ENCODE measurements at regions of chr17 and their contacts with region 1.

Region 1: DNA sequence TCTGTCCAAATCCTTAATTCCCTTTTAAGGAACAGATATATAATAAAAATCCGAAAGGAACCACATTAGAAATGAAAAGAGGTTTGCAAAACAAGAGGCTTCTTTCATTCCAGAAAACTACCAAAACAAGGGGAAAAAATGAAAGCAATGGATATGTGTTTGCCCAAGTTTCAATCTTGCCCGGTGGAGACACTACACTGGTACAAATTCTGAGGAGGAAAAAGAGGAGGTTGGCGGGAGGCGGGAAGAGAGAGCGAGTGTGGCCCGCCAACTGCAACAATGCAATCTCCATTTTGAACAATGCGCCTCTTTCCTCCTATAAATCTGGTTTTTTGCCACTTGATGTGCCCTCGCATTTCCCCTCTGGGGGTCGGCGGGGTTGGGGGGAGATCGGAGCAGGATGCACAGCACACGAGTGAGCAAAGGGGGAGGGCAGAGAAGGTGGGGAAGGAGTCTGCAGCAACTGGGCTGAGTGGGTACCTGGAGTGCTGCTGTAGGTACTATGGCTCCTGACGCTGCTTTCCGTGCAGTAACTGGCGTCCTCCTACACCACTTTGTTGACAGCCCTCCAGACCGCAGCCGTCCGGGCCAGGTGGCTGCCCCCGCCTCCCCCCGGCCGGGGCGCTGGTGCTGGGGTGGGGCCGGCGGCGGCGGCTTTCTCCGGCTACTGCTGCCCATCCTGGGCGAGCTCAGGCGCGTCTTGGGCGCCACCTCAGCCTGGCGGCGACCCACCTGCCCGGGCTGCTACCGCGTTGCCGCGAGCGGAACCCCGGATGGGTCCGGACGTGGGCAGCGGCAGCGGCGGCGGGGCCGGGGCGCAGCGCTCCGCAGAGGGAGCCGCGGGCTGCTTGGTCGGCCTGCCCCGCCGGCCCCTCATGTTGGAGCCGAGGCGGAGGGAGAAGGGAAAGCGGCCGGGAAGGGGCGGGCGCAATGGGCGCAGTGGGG is 93.8 kb upstream of the PLEKHM1 start:
- DNase-seq: peak; percentile 44 to 75 (median 53)
- H3K4me3 ChIP-seq: peak overlapping the region in 3 of 4 donors; percentile 32 to 91 (median 56)
- H3K27ac ChIP-seq: peak overlapping the region in 4 of 5 donors; percentile 57 to 83 (median 75)
- H3K4me1 ChIP-seq: peaks cover 0 to 9% of the 10 kb centered on the region in 2 donors
- H3K27me3 ChIP-seq: no peaks in the 10 kb centered on the region
- CTCF ChIP-seq: no peak
- POLR2A ChIP-seq: no peak

Region 2: DNA sequence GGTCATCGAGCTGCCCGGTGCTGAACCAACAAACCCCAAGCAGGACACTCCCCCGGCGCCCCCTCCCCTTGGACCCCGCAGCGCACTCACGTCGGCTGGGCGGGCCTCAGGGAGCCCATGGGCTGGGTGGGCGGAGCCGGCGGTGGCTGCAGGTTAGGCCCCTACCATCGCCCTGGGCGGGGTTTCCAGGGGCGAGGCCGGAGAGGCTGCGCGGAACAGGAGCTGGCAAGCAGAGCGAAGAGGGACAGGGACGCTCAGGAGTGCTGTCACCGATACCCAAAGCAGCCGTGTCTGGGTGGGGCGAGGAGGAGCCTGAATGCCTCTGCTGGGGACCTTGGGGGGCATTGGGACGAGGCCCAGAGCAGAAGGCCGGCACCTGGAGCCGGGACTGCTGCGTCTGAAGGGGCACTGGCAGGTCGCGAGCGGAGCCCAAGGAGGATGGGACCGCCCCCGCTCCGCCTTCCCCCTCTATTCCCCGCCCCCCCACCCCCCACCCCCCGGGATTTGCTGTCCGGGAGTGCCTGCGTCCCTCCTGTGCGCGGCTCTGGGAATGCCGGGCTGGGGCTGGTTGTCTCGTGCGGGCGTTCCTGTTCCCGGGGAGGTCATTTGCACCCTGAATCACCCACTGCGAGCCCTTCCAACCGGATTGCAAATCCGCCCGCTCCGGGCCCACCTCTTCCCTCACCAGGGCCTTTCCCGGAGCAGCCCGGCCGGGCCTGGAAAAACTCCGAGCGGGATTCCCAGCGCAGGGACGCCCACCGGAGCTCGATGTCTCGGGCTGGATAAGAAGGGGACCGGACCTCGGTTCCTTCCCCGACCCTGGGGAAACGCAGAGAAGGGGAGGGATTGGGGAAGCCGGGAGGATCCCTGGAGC is 152.6 kb before region 1 on chr17:
- intact Hi-C with region 1: loop called in 1 of 2 experiments (anchors 5 kb)
- DNase-seq: peak; percentile 46 to 78 (median 55)
- H3K4me3 ChIP-seq: peak overlapping the region in 3 of 4 donors; percentile 11 to 58 (median 37)
- H3K27ac ChIP-seq: peak overlapping the region in 3 of 5 donors; percentile 13 to 79 (median 38)
- H3K4me1 ChIP-seq: peaks cover 31 to 33% of the 10 kb centered on the region in 2 donors
- H3K27me3 ChIP-seq: peaks cover 17% of the 10 kb centered on the region
- CTCF ChIP-seq: no peak
- POLR2A ChIP-seq: no peak

Region 3: DNA sequence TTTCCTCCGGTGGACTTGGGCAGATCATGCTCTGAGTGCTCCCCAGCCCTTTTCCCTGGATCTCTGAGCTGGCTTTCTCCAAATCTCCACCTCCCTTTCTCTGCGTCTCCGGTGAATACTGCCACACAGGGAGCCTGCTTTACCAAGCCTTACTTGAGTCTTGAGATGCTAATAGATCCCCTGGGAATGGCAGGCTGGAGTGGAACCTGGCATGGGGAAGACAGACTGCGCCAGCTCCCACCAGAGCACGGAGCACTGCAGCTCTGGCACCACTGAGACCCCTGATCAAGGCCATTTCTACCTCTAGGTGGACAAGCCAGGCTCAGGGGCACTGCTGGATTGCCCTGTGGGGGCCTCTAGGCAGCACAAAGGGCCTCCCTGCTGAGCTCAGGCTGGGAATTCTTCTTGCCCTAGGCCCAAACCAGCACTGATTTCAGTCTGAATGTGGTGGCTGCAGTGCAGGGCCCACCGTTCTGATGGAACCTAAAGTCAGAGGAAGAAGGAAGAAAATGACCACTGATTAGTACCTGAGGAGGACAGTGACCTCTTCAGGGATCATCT is 125.4 kb after region 1 on chr17:
- intact Hi-C with region 1: no loop called
- DNase-seq: no peak
- H3K4me3 ChIP-seq: no peak overlapping the region
- H3K27ac ChIP-seq: no peak overlapping the region
- H3K4me1 ChIP-seq: no peaks in the 10 kb centered on the region
- H3K27me3 ChIP-seq: no peaks in the 10 kb centered on the region
- CTCF ChIP-seq: no peak
- POLR2A ChIP-seq: no peak

Measured in adrenal gland (tissue), 19 donors.